Posterior vena cava (tissue), 2 donors: ENCODE measurements at regions of chr18 and their contacts with region 1.

Region 1: GRCh38 chr18:70015127-70015526 is 67.5 kb upstream of the CD226 start:
- DNase-seq: peak; percentile 54

Region 2: DNA sequence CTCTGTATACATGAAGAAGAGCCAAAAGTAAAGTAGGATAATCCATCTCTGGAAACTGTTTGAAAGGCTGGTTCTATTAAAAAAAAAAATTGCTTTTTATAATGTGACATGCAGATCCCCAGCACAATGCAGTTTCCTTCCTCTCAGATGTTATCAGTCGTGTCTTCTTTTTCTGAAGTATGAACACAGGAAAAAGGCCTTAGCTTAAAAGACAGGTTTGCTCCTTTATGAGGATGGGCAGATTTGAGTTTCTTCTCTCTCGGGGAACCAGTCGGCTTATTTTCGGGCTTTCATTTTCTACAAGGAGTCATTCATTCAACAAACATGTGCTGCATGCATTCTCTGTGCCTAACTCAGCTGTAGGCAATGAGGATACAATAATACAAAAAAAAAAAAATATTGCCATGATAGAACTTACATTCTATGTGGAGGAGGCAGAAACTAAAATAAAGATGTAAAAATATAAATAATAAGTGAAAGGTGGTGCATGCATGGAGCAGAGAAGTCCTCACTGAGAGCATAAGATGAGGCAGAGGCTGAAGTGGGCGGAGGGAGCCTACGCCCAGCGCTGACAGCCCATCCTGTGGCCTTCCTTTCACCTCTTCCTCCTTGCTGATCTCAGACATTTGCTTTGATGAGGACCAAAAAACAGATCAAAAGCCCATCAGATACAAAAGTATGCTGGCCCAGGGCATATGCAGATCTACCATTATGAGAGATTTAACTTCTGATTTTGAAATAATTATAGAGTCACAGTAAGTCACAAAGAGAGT is 67.6 kb before region 1 on chr18 and contains the start of gene CD226:
- intact Hi-C with region 1: loop called in 1 of 2 experiments (anchors 2 kb)
- DNase-seq: no peak
- total RNA-seq, gene CD226: 1.6 to 2.5 TPM

Region 3: GRCh38 chr18:70205421-70206397 is 190.6 kb after region 1 on chr18 and contains the start of gene RTTN:
- intact Hi-C with region 1: no loop called
- DNase-seq: peak; percentile 98
- total RNA-seq, gene RTTN: 9.4 to 9.7 TPM